HepG2 (cell line): ENCODE measurements at regions of chr17 and their contacts with region 1.

Region 1: GRCh38 chr17:63621766-63622519 is at the start of gene MAP3K3:
- DNase-seq: peak; percentile 100
- ATAC-seq: peak; percentile 95
- H3K4me3 ChIP-seq: peak within 1 kb of the TSS; percentile 80 to 97 (median 85)
- H3K27ac ChIP-seq: peak within 1 kb of the TSS; percentile 42
- H3K4me1 ChIP-seq: peaks cover 43% of the 10 kb centered on the region
- H3K27me3 ChIP-seq: peaks cover 0 to 4% of the 10 kb centered on the region in 2 experiments; a peak in 1 of 5 replicates
- CTCF ChIP-seq: peak; percentile 58
- EP300 ChIP-seq: no peak
- POLR2A ChIP-seq: peak; percentile 68 to 94
- RAD21 ChIP-seq: peak; percentile 37; the same call in 1 of the 2 replicates
- total RNA-seq, gene MAP3K3: 15.9 and 21.8 TPM in 2 replicates

Region 2: GRCh38 chr17:63431939-63432804 is 189.8 kb before region 1 on chr17:
- CTCF ChIA-PET with region 1: no interaction called
- POLR2A ChIA-PET with region 1: interaction called, 11 read pairs
- in situ Hi-C with region 1: no loop called
- intact Hi-C with region 1: no loop called
- DNase-seq: peak; percentile 81
- ATAC-seq: peak; percentile 72
- H3K4me3 ChIP-seq: peak overlapping the region; percentile 23 to 62 (median 39)
- H3K27ac ChIP-seq: peak overlapping the region; percentile 63
- H3K4me1 ChIP-seq: peaks cover 72% of the 10 kb centered on the region
- H3K27me3 ChIP-seq: peaks cover 0 to 9% of the 10 kb centered on the region in 2 experiments; a peak in 2 of 5 replicates
- CTCF ChIP-seq: peak; percentile 20
- EP300 ChIP-seq: 0 out of 4 replicates have a peak, but pooled peaks of 1 of the 2 experiments have one; percentile 37
- POLR2A ChIP-seq: no peak
- RAD21 ChIP-seq: no peak

Region 3: GRCh38 chr17:63579540-63580001 is 42.4 kb before region 1 on chr17:
- CTCF ChIA-PET with region 1: no interaction called
- POLR2A ChIA-PET with region 1: interaction called, 17 read pairs
- in situ Hi-C with region 1: no loop called
- intact Hi-C with region 1: loop called (anchors 2 kb)
- DNase-seq: peak; percentile 83
- ATAC-seq: peak; percentile 58
- H3K4me3 ChIP-seq: peak overlapping the region in 2 of 3 experiments; percentile 8 to 33; a peak in 2 of 6 replicates
- H3K27ac ChIP-seq: peak overlapping the region; percentile 83
- H3K4me1 ChIP-seq: peaks cover 46% of the 10 kb centered on the region
- H3K27me3 ChIP-seq: no peaks in the 10 kb centered on the region
- CTCF ChIP-seq: peak; percentile 31; the same call in 1 of the 2 replicates
- EP300 ChIP-seq: peak in 1 of 2 experiments; percentile 53; a peak in 2 of 4 replicates
- POLR2A ChIP-seq: no peak
- RAD21 ChIP-seq: no peak

Region 4: GRCh38 chr17:63600569-63601438 is 21.1 kb before region 1 on chr17 and contains the start of gene TACO1:
- CTCF ChIA-PET with region 1: no interaction called
- POLR2A ChIA-PET with region 1: interaction called, 47 read pairs
- in situ Hi-C with region 1: no loop called
- intact Hi-C with region 1: no loop called
- DNase-seq: peak; percentile 83
- ATAC-seq: peak; percentile 94
- H3K4me3 ChIP-seq: peak within 1 kb of the TSS; percentile 78 to 90 (median 81)
- H3K27ac ChIP-seq: peak within 1 kb of the TSS; percentile 88
- H3K4me1 ChIP-seq: peaks cover 23% of the 10 kb centered on the region
- H3K27me3 ChIP-seq: no peaks in the 10 kb centered on the region; a peak in 1 of 5 replicates
- CTCF ChIP-seq: peak; percentile 41
- EP300 ChIP-seq: peak; percentile 74 to 81
- POLR2A ChIP-seq: peak; percentile 75 to 88
- RAD21 ChIP-seq: peak; percentile 75
- total RNA-seq, gene TACO1: 53.6 and 57.6 TPM in 2 replicates

Region 5: GRCh38 chr17:63653050-63653449 is 31.1 kb after region 1 on chr17:
- CTCF ChIA-PET with region 1: no interaction called
- POLR2A ChIA-PET with region 1: no interaction called
- in situ Hi-C with region 1: no loop called
- intact Hi-C with region 1: no loop called
- DNase-seq: no peak
- ATAC-seq: no peak
- H3K4me3 ChIP-seq: no peak overlapping the region
- H3K27ac ChIP-seq: no peak overlapping the region
- H3K4me1 ChIP-seq: no peaks in the 10 kb centered on the region
- H3K27me3 ChIP-seq: no peaks in the 10 kb centered on the region
- CTCF ChIP-seq: no peak
- EP300 ChIP-seq: no peak
- POLR2A ChIP-seq: no peak
- RAD21 ChIP-seq: no peak

Region 6: DNA sequence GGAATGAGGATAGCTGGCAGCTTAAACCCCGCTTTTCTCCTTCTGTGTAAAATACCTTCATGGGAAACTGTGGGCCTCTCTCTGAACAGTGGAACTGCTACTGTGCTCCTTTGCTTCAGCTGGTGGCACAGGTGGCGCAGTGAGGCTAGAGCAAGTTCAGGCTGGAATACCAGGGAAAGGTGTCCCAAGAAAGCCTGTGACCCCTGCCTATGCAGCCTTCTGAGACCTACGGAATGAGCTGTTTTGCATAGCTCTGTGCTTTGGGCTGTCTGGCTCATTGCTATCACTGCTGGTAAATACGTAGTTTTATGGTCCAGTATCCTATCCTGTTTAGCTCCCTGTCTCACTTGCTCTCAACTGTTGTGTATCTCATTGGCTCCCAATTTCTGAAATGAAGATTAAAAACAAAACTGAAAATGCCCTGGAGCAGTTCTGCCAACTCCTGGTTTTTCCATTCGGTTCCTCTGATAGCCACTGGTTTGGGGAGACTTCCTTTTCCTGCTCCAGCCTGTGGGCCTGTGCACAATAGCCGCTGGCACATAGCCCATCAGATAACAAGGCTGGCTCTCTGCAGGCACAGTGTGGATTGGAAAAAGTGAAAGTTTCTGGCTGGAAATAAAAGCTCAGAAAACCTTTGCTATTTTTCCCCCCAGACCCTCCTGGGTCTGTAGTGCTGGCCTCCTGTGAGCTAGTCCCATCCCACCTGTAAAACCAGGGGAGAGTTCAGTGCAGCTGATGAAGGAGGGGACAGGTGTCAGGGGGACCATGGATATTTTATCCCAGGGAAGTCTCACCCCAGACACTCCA is 53.9 kb after region 1 on chr17:
- CTCF ChIA-PET with region 1: no interaction called
- POLR2A ChIA-PET with region 1: interaction called, 12 read pairs
- in situ Hi-C with region 1: no loop called
- intact Hi-C with region 1: loop called (anchors 5 kb)
- DNase-seq: peak; percentile 83
- ATAC-seq: peak; percentile 88
- H3K4me3 ChIP-seq: no peak overlapping the region
- H3K27ac ChIP-seq: peak overlapping the region; percentile 12
- H3K4me1 ChIP-seq: peaks cover 20% of the 10 kb centered on the region
- H3K27me3 ChIP-seq: no peaks in the 10 kb centered on the region
- CTCF ChIP-seq: no peak
- EP300 ChIP-seq: no peak
- POLR2A ChIP-seq: no peak
- RAD21 ChIP-seq: no peak

Region 7: DNA sequence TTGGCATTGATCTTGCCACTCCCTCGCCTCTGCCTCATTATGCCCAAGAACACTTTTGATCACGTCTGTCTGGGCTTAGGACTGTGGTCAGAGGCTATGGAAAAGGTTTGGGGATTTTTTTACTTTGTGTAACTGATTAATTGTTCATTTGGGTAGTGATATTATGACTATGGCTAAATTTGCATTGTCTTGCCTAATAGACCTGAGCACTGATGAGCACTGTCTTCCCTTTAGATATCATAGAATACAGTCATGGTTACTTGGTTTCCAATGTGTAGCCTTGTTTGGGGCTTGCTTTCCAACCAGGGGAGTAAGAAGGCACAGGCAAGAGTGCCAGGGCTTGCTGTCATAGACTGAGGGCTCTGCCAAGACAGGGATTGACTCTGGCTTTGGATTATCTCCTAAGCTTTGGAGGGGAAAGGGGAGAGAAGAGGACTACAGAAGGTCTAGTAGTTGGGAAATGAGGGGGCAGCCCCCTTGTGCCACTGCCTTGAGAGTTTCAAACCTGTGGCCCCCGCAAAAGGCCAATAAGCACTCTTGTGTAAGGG is 64.3 kb after region 1 on chr17:
- CTCF ChIA-PET with region 1: no interaction called
- POLR2A ChIA-PET with region 1: no interaction called
- in situ Hi-C with region 1: no loop called
- intact Hi-C with region 1: no loop called
- DNase-seq: no peak
- ATAC-seq: no peak
- H3K4me3 ChIP-seq: no peak overlapping the region
- H3K27ac ChIP-seq: no peak overlapping the region
- H3K4me1 ChIP-seq: no peaks in the 10 kb centered on the region
- H3K27me3 ChIP-seq: no peaks in the 10 kb centered on the region
- CTCF ChIP-seq: no peak
- EP300 ChIP-seq: no peak
- POLR2A ChIP-seq: no peak
- RAD21 ChIP-seq: no peak